A549 (cell line): ENCODE measurements at regions of chr3 and their contacts with region 1.

Region 1: GRCh38 chr3:141360888-141361598 is 7.3 kb upstream of the ZBTB38 start:
- DNase-seq: peak; percentile 86 to 95
- ATAC-seq: peak; percentile 95
- H3K4me3 ChIP-seq: no peak overlapping the region
- H3K27ac ChIP-seq: peak overlapping the region; percentile 89 to 100
- H3K4me1 ChIP-seq: peaks cover 30% of the 10 kb centered on the region
- CTCF ChIP-seq: peak; percentile 92
- EP300 ChIP-seq: peak; percentile 75 to 84; a peak in 3 of 5 replicates
- POLR2A ChIP-seq: no peak
- RAD21 ChIP-seq: peak; percentile 94 to 97

Region 2: DNA sequence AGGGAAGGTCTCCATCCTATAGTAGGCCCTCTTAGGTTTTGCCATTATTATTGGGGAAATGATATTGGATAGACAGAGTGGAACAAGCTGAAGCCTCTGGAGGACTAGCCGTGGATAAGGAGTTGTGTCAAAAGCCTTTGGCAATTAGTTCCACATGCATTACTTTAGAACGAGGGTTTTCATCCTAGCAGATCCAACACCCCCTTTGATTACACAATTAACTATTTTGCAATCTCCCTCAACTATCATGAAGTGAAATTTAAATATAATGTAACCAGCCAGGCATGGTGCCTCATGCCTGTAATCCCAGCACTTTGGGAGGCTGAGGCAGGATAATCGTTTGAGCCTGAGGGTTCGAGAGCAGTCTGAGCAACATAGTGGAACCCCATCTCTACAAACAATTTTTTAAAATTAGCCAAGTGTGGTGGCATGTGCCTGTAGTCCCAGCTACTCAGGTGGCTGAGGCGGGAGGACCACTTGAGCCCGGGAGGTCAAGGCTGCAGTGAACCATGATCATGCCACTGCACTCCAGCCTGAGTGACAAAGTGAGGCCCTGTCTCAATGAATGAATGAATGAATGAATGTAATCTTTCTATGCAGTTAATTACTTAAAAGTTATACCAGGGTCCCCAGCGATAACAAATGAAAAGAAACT is 72.6 kb before region 1 on chr3:
- CTCF ChIA-PET with region 1: no interaction called
- POLR2A ChIA-PET with region 1: no interaction called
- DNase-seq: no peak
- ATAC-seq: no peak
- H3K4me3 ChIP-seq: no peak overlapping the region
- H3K27ac ChIP-seq: no peak overlapping the region
- H3K4me1 ChIP-seq: no peaks in the 10 kb centered on the region
- CTCF ChIP-seq: no peak
- EP300 ChIP-seq: no peak
- POLR2A ChIP-seq: no peak
- RAD21 ChIP-seq: no peak

Region 3: DNA sequence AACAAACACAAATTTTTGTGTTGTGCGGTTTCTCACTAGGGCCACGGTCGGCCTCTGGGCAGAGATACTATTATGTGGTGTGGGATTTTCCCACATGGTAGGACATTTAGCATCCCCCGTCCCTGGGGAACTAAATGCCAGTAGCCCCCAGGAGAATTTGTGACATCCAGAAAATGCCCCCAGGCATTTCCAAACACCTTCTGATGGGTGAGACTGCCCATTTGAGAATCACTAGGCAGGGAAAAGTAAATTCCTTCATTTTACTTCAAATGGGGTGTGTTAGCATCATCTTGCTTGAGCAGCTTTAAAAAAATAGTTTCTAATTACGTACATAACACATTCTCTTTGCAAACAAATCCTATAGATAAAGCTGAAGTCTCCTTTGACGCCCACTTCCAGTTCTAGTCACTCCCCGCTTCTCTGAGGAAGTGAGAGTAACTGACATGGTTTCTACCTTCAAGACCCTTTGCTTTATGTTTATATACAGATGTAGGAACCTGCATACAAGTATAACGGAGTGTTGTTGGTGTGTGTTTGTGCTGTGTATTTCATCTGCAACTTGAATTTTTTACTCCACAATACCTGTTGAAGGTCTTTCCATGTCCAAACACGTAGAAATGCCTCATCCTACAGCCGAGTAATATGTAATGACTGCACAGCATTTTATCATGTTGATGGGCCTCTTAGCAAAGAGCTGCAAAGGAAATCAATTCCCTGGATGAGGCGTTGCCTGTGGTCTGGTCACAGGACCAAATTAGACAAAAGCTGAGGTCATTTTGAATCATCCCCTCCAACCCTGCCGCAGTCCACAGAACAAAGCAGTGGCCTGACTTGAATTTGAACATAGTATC is 24.1 kb before region 1 on chr3:
- CTCF ChIA-PET with region 1: interaction called, 36 read pairs
- POLR2A ChIA-PET with region 1: interaction called, 11 read pairs
- DNase-seq: peak in 1 of 2 experiments; percentile 65
- ATAC-seq: peak; percentile 66 to 82; a peak in 5 of 6 replicates
- H3K4me3 ChIP-seq: no peak overlapping the region
- H3K27ac ChIP-seq: peak overlapping the region; percentile 91 to 94
- H3K4me1 ChIP-seq: peaks cover 50% of the 10 kb centered on the region
- CTCF ChIP-seq: no peak
- EP300 ChIP-seq: peak in 1 of 2 experiments; percentile 54; a peak in 1 of 5 replicates
- POLR2A ChIP-seq: no peak
- RAD21 ChIP-seq: no peak

Region 4: GRCh38 chr3:141402476-141403171 is 41.6 kb after region 1 on chr3:
- CTCF ChIA-PET with region 1: interaction called, 10 read pairs
- POLR2A ChIA-PET with region 1: interaction called, 6 read pairs
- DNase-seq: peak; percentile 45 to 74
- ATAC-seq: peak; percentile 82
- H3K4me3 ChIP-seq: peak overlapping the region; percentile 66
- H3K27ac ChIP-seq: peak overlapping the region; percentile 99 to 100
- H3K4me1 ChIP-seq: peaks cover 84% of the 10 kb centered on the region
- CTCF ChIP-seq: no peak
- EP300 ChIP-seq: no peak
- POLR2A ChIP-seq: no peak
- RAD21 ChIP-seq: no peak

Region 5: DNA sequence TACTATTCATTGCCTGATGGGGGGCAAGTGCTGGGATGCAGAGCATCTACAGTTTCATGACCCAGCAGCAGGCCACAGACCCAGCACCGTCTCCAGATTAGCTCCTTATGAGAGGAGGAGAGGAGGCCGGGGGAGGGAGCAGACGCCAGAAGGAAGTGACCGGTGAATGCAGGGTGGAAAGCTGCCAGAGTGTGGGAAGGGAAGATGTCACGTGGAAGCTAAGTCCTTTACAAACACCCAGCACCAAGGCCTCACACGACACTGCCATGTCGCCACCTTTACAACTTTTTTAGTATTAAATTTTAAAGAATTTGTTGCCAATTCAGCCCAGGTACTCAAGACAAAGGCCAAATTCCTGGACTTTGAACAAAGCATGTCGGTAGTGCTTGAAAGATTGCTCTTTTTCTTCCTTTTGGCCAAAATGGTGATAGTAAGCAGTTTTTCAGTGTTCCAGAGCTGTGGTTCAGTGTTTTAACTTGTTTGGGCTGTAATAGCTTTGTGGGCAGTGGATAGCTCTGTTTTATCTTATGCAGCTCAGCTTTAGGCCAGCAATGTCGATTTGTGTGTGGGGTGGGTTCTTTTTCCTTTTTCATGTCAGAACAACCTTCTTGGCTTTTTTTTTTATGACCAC is 65.5 kb after region 1 on chr3:
- CTCF ChIA-PET with region 1: interaction called, 17 read pairs
- POLR2A ChIA-PET with region 1: no interaction called
- DNase-seq: peak in 1 of 2 experiments; percentile 75
- ATAC-seq: peak in 1 of 2 experiments; percentile 42; a peak in 4 of 6 replicates
- H3K4me3 ChIP-seq: no peak overlapping the region
- H3K27ac ChIP-seq: peak overlapping the region; percentile 99 to 100
- H3K4me1 ChIP-seq: peaks cover 75% of the 10 kb centered on the region
- CTCF ChIP-seq: no peak
- EP300 ChIP-seq: no peak
- POLR2A ChIP-seq: no peak
- RAD21 ChIP-seq: no peak; a peak in 1 of 5 replicates

Region 6: DNA sequence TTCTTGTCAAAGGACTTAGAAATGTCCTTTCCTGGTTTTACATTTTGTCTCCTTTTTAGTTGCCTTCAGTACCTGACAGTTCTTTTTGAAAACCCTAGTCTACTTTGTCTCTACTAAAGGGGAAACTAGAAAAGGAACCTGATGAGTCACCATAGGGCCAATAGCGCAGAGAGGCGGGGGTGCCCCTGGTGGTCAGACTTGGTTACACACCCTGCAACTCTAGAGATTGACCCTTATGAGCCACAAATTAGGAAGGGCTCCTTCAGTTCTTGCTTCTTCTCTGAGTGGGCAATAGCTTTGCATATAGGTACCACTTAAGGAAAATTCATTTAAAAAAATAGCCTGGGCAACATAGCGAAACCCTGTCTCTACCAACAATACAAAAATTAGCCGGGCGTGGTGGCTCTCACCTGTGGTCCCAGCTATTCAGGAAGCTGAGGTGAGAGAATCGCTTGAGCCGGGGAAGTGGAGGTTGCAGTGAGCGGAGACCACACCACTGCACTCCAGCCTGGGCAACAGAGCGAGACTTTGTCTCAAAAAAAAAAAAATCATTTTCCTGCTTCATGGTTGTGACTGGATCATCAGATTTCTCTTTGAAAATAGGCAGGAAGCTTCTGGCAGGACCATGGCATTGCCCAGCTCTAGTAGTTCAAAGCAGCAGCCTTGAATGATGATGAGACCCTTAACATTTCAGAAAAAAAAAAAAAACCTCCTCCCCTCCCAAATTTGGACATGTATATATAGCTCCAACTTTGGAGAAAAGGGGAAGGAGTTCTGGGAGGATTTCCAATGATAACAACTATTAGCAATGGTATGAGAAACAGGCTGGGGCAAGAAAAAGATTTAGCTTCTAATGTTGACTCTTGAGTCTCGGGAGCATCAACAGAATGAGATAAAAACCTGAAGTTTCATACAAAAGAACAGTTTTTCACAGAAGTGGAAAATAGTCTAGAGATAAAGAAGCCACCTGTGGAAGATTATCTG is 80.6 kb after region 1 on chr3:
- CTCF ChIA-PET with region 1: interaction called, 34 read pairs
- POLR2A ChIA-PET with region 1: no interaction called
- DNase-seq: peak; percentile 66 to 73
- ATAC-seq: peak; percentile 88 to 94
- H3K4me3 ChIP-seq: no peak overlapping the region
- H3K27ac ChIP-seq: peak overlapping the region; percentile 4 to 68; a peak in 4 of 6 replicates
- H3K4me1 ChIP-seq: peaks cover 23% of the 10 kb centered on the region
- CTCF ChIP-seq: peak; percentile 61
- EP300 ChIP-seq: no peak
- POLR2A ChIP-seq: no peak
- RAD21 ChIP-seq: peak; percentile 62 to 71

Region 7: GRCh38 chr3:141460097-141460704 is 99.2 kb after region 1 on chr3:
- CTCF ChIA-PET with region 1: interaction called, 58 read pairs
- POLR2A ChIA-PET with region 1: no interaction called
- DNase-seq: peak; percentile 86 to 92
- ATAC-seq: peak; percentile 99 to 100
- H3K4me3 ChIP-seq: no peak overlapping the region
- H3K27ac ChIP-seq: peak overlapping the region in 1 of 2 experiments; percentile 46; a peak in 4 of 6 replicates
- H3K4me1 ChIP-seq: peaks cover 7% of the 10 kb centered on the region; the same call in 1 of the 3 replicates
- CTCF ChIP-seq: peak; percentile 95
- EP300 ChIP-seq: no peak
- POLR2A ChIP-seq: no peak
- RAD21 ChIP-seq: peak; percentile 97 to 98